ENCODE measurements at regions of chr4 and their contacts with region 1.

Region 1: DNA sequence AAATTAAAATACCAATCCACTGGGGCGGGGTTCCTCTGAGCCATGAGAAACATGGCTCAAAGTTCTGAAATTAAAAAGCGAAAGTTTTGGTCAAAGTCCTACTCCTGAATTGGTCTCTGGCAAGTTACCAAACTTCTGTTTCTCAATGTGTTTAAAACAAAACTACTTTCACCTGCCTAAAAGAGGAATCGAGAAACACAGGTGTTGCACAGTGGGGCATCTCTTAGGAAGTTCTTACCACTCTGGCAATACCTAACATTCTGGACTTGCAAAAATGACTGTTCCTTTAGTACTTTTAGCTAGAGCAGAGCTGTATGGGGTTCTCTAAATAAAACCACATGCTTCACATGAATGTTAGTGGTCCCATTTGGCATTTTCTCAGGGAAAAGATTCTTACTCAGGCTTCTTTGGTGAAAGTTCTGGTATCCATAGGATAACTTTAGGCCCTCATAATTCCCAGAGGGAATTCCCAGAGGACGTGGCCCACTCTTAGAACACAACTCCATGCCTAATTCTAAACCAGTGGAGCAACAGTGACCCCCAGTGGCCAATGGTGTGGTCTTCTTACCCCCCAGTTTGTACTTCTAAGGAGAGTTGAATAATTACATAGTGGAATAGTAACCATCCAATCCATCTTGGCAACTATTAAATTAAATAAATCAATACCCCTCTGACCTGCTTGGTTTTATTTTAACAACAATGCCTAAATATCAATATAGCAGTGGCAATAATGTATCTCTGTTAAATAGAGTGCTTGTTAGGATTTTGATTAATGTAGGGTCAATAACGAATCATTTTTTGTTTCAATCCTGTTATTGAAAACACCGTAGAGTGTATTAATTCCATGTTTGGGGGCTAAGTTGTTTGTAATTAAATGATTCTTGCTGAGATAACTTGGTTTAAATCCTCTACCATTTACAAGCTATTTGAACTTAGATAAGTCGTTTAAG is 21.9 kb downstream of the BMP3 start:
- H3K4me3 ChIP-seq: no peak overlapping the region
- H3K27ac ChIP-seq: no peak overlapping the region
- H3K4me1 ChIP-seq: no peaks in the 10 kb centered on the region
- CTCF ChIP-seq: no peak

Region 2: DNA sequence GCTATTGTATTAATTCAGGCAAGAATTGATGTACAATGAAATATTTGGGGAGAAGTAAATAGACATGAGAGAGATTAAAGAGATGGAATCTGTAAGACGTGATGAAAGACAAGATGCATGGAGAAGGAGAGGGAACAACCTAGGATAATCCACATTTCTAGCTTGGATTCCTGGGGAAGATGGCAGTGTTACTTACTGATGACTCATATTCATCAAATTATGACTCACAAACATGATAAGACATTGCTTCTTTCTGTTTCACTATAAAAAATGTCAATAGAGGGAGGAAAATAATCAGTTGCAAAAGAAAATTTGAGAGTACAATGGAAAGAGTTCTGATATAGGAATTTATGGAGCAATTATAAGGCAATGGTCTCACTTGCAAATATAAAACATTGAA is 125.9 kb before region 1 on chr4:
- CTCF ChIA-PET with region 1: no interaction called
- POLR2A ChIA-PET with region 1: no interaction called
- H3K4me3 ChIP-seq: no peak overlapping the region
- H3K27ac ChIP-seq: no peak overlapping the region
- H3K4me1 ChIP-seq: no peaks in the 10 kb centered on the region
- CTCF ChIP-seq: no peak

Region 3: DNA sequence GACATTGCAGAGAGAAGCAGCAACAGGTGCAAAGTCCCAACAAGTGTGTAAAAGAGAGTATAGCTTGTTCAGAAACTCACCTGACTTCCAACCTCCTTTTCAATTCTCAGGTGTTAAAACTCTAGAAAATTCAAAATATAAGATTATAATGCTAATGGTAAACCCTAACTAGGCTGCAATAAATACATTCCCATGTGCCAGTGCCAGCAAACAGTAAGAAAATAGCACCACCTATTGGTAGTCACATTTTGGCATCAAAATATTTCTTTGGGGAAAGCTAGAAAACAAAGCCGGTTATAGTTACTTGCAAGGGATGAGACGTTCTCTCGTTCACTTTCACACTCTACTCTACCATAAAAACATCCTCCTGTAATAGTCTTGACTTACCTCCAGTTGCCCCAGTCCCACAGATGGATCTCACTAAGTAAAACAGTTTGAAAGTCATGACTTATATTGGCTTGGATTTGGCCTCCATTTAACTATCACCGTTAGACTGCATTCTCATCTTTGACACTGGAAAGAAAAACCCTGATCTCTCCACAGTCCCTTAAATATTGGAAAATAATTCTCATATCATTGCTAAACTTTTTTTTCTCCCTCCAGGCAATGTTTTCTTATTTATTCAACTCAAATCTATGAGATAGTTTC is 12.3 kb before region 1 on chr4:
- CTCF ChIA-PET with region 1: interaction called, 13 read pairs
- POLR2A ChIA-PET with region 1: no interaction called
- H3K4me3 ChIP-seq: no peak overlapping the region
- H3K27ac ChIP-seq: no peak overlapping the region
- H3K4me1 ChIP-seq: no peaks in the 10 kb centered on the region; the same call in 1 of the 2 replicates
- CTCF ChIP-seq: 0 out of 2 replicates have a peak, but pooled peaks have one; percentile 23

Measured in HEK293 (cell line).